ENCODE measurements at regions of chr1 and their contacts with region 1.

Region 1: DNA sequence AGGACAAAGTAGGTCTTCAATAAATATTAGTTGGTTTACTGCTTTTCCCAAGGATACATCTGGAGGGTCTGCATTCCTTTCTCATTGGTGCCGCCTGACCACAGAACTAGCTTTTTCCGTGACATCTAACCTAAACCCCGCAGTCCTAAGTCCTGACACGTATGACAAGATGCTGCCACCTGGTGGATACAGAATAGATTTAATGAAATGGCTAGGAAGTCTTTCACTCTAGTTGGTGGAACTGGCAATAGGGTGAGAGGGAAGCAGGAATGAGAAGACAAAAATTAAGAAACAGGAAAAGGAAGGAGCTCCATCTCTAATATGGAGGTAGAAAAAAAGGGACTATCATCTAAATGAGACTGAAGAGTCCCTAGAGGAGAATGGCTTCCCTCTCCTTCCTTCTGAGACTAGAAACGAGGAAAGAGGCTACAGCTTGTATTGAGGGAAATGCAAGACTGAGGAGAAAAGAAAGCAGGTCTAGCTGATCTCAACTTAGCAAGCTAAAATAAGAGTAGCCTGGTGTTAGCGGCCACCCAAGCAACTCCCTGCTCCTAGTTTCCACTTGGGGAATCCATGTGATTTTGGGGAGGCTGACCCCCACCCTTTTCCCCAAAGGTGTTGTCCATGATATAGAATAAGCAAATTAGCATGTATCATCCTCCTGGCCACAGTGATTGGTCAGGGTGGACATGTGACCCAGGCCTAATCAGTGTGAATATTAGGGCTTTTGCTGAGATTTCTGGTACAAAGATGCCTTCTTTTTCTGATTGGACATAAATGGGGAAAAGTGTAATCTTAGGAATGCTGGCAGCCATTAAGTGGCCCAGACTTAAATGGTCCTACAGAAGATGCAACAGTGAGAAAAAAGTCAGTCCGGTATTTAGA is 5.9 kb downstream of the RFX5 start:
- DNase-seq: peak; percentile 78 to 85 (median 85)
- H3K4me3 ChIP-seq: peak overlapping the region in 1 of 7 experiments; percentile 26
- H3K27ac ChIP-seq: peak overlapping the region in 1 of 2 experiments; percentile 27
- H3K4me1 ChIP-seq: peaks cover 7 to 21% (median 15%) of the 10 kb centered on the region in 4 experiments
- H3K27me3 ChIP-seq: no peaks in the 10 kb centered on the region

Region 2: DNA sequence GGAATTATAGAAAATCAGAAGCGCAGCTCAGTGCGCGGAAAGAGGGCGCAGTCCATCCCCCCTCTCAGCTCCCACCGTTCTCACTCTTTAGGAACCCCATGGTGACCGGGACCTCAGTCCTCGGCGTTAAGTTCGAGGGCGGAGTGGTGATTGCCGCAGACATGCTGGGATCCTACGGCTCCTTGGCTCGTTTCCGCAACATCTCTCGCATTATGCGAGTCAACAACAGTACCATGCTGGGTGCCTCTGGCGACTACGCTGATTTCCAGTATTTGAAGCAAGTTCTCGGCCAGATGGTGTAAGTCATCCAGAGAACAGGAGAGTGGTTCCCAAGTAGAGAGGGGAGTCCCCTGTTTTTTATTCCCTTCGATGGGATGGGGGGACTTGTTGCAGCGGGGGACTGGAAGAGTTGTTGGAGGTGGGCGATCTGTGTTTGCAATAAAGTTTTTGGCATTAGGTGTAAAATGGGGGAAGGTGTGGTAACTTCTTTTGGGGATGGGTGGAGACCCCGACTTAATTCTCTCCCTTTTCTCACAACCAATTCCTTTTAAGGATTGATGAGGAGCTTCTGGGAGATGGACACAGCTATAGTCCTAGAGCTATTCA is 58.9 kb after region 1 on chr1:
- CTCF ChIA-PET with region 1: interaction called, 50 read pairs
- POLR2A ChIA-PET with region 1: interaction called, 5 read pairs
- DNase-seq: no peak
- H3K4me3 ChIP-seq: peak overlapping the region; percentile 83 to 99 (median 94)
- H3K27ac ChIP-seq: peak overlapping the region; percentile 93 to 97
- H3K4me1 ChIP-seq: peaks cover 0 to 14% (median 12%) of the 10 kb centered on the region in 4 experiments
- H3K27me3 ChIP-seq: no peaks in the 10 kb centered on the region

Region 3: GRCh38 chr1:151655371-151655770 is 314.3 kb after region 1 on chr1:
- CTCF ChIA-PET with region 1: no interaction called
- POLR2A ChIA-PET with region 1: no interaction called
- DNase-seq: no peak
- H3K4me3 ChIP-seq: no peak overlapping the region
- H3K27ac ChIP-seq: no peak overlapping the region
- H3K4me1 ChIP-seq: peaks cover 1 to 30% (median 11%) of the 10 kb centered on the region in 4 experiments
- H3K27me3 ChIP-seq: no peaks in the 10 kb centered on the region

Measured in common myeloid progenitor, CD34-positive (primary cell).